SK-N-SH (cell line): ENCODE measurements at regions of chr14 and their contacts with region 1.

Region 1: DNA sequence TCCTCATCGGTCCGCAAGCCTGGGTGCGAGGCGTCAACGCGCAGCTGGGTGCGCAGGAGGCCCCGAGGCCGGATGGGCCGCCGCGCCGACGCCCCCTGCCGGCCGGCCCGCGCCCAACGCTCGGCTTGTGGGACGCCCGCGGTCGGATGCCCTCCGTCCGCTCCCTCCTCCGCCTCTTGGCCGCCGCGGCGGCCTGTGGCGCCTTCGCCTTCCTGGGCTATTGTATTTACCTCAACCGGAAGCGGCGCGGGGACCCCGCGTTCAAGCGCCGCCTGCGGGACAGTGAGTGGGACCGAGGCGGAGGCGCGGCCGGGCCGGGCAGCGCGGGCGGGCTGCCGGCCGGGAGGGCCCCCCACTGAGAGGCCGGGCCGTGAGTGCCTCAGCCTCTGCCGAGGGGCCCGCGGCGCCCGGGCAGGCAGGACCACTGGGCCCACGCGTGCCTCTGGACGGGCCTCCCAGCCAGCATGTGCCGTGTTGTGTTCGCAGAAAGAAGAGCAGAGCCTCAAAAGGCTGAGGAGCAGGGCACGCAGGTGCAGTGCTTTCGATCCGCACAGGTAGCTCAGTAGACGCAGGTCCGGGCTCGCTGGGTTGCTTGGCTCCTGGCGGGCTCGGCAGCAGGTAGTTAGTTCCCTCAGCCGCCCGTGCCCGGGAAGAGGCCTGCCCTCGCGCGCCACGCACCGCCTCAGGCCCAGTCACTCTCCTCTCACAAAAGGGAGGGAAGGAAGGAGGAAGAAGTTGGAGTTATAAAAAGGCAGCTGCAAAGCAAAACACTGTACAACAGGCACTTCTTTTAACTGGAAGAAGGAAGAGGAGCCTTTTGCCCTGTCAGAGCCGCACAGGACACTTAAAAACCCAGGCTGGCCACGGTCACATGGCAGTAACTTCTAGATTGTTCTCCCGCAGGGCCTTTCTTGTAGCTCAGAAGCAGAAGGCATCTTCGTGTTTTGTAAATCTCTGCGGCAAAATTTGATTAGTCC is at the start of gene TOMM20L:
- DNase-seq: peak; percentile 95
- H3K4me3 ChIP-seq: peak within 1 kb of the TSS; percentile 47 to 60
- H3K27ac ChIP-seq: no peak within 1 kb of the TSS
- H3K4me1 ChIP-seq: peaks cover 0 to 6% of the 10 kb centered on the region in 2 experiments; a peak in 1 of 4 replicates
- H3K27me3 ChIP-seq: no peaks in the 10 kb centered on the region
- CTCF ChIP-seq: peak; percentile 78
- EP300 ChIP-seq: no peak
- RAD21 ChIP-seq: peak; percentile 49
- polyA plus RNA-seq, gene TOMM20L: not detected in 2 replicates

Region 2: GRCh38 chr14:57962325-57963035 is 433.6 kb before region 1 on chr14:
- CTCF ChIA-PET with region 1: no interaction called
- POLR2A ChIA-PET with region 1: no interaction called
- DNase-seq: no peak
- H3K4me3 ChIP-seq: no peak overlapping the region
- H3K27ac ChIP-seq: no peak overlapping the region
- H3K4me1 ChIP-seq: no peaks in the 10 kb centered on the region
- H3K27me3 ChIP-seq: peaks cover 7% of the 10 kb centered on the region; the same call in 1 of the 2 replicates
- CTCF ChIP-seq: no peak
- EP300 ChIP-seq: no peak
- RAD21 ChIP-seq: no peak

Region 3: DNA sequence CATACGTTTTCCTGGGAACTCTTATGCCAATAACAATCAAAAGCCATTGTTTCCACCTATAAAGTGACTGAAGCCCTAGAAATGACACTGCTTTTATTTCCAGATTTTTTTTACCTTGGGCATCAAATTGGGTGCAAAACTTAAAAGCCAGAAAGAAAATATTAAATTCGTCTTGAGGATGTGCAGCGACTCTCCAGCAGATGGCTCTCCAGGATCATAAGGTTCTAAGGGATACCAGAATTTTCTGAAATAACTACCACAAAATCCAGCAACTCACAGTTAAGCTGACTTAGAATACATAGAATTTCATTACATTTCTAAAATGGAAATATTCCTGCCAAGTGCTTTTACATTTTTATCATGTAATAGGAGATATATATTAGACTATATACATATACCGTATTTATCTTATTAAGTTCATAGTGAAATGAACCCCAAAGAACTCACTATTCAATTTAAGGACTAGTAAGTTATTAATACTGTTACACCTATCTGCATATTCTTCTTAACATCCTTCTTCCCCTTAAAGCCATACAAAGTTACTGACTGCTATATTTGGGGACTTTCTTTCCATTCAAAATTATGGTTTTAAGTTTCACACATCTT is 288.1 kb before region 1 on chr14:
- CTCF ChIA-PET with region 1: interaction called, 12 read pairs
- POLR2A ChIA-PET with region 1: no interaction called
- DNase-seq: peak; percentile 51
- H3K4me3 ChIP-seq: no peak overlapping the region; a peak in 1 of 4 replicates
- H3K27ac ChIP-seq: no peak overlapping the region
- H3K4me1 ChIP-seq: no peaks in the 10 kb centered on the region
- H3K27me3 ChIP-seq: no peaks in the 10 kb centered on the region
- CTCF ChIP-seq: peak; percentile 89
- EP300 ChIP-seq: no peak
- RAD21 ChIP-seq: peak; percentile 86

Region 4: GRCh38 chr14:58376791-58377190 is 19.3 kb before region 1 on chr14:
- CTCF ChIA-PET with region 1: interaction called, 10 read pairs
- POLR2A ChIA-PET with region 1: no interaction called
- DNase-seq: no peak
- H3K4me3 ChIP-seq: no peak overlapping the region
- H3K27ac ChIP-seq: no peak overlapping the region
- H3K4me1 ChIP-seq: no peaks in the 10 kb centered on the region
- H3K27me3 ChIP-seq: no peaks in the 10 kb centered on the region
- CTCF ChIP-seq: no peak
- EP300 ChIP-seq: no peak
- RAD21 ChIP-seq: no peak

Region 5: GRCh38 chr14:58408681-58409215 is 12.6 kb after region 1 on chr14:
- CTCF ChIA-PET with region 1: interaction called, 11 read pairs
- POLR2A ChIA-PET with region 1: no interaction called
- DNase-seq: no peak
- H3K4me3 ChIP-seq: no peak overlapping the region
- H3K27ac ChIP-seq: no peak overlapping the region
- H3K4me1 ChIP-seq: no peaks in the 10 kb centered on the region
- H3K27me3 ChIP-seq: no peaks in the 10 kb centered on the region
- CTCF ChIP-seq: no peak
- EP300 ChIP-seq: no peak
- RAD21 ChIP-seq: no peak

Region 6: GRCh38 chr14:58427281-58428117 is 31.4 kb after region 1 on chr14 and contains the starts of genes KIAA0586 and TIMM9:
- CTCF ChIA-PET with region 1: interaction called, 19 read pairs
- POLR2A ChIA-PET with region 1: interaction called, 3 read pairs
- DNase-seq: peak; percentile 88
- H3K4me3 ChIP-seq: peak within 1 kb of the TSS; percentile 80 to 90
- H3K27ac ChIP-seq: peak within 1 kb of the TSS; percentile 91 to 99
- H3K4me1 ChIP-seq: peaks cover 0 to 6% of the 10 kb centered on the region in 2 experiments; a peak in 3 of 4 replicates
- H3K27me3 ChIP-seq: no peaks in the 10 kb centered on the region
- CTCF ChIP-seq: no peak
- EP300 ChIP-seq: peak; percentile 72 to 95
- RAD21 ChIP-seq: no peak
- polyA plus RNA-seq, gene KIAA0586: 7.5 and 9.2 TPM in 2 replicates
- polyA plus RNA-seq, gene TIMM9: 17.9 and 20.3 TPM in 2 replicates

Region 7: GRCh38 chr14:58460772-58461171 is 64.7 kb after region 1 on chr14:
- CTCF ChIA-PET with region 1: no interaction called
- POLR2A ChIA-PET with region 1: no interaction called
- DNase-seq: no peak
- H3K4me3 ChIP-seq: no peak overlapping the region
- H3K27ac ChIP-seq: no peak overlapping the region
- H3K4me1 ChIP-seq: no peaks in the 10 kb centered on the region
- H3K27me3 ChIP-seq: no peaks in the 10 kb centered on the region
- CTCF ChIP-seq: no peak
- EP300 ChIP-seq: no peak
- RAD21 ChIP-seq: no peak